Spleen (tissue), 13 donors: ENCODE measurements at regions of chr17 and their contacts with region 1.

Region 1: GRCh38 chr17:62703775-62704378 is 76.4 kb downstream of the MRC2 start:
- DNase-seq: peak; percentile 95
- H3K4me3 ChIP-seq: peak overlapping the region; percentile 52 to 86 (median 58)
- H3K27ac ChIP-seq: peak overlapping the region in 6 of 8 donors; percentile 58 to 77 (median 71)
- H3K4me1 ChIP-seq: peaks cover 4 to 42% (median 22%) of the 10 kb centered on the region in 6 donors
- H3K27me3 ChIP-seq: peaks cover 0 to 53% (median 0%) of the 10 kb centered on the region in 7 donors
- CTCF ChIP-seq: peak; percentile 54 to 93 (median 89)
- POLR2A ChIP-seq: no peak

Region 2: GRCh38 chr17:62668091-62668795 is 35.6 kb before region 1 on chr17:
- intact Hi-C with region 1: no loop called
- DNase-seq: no peak
- H3K4me3 ChIP-seq: no peak overlapping the region
- H3K27ac ChIP-seq: no peak overlapping the region
- H3K4me1 ChIP-seq: no peaks in the 10 kb centered on the region
- H3K27me3 ChIP-seq: peaks cover 0 to 5% (median 0%) of the 10 kb centered on the region in 7 donors
- CTCF ChIP-seq: no peak
- POLR2A ChIP-seq: no peak

Region 3: GRCh38 chr17:62970617-62971272 is 266.9 kb after region 1 on chr17:
- intact Hi-C with region 1: loop called (anchors 2 kb)
- DNase-seq: no peak
- H3K4me3 ChIP-seq: no peak overlapping the region
- H3K27ac ChIP-seq: no peak overlapping the region
- H3K4me1 ChIP-seq: peaks cover 9 to 28% (median 24%) of the 10 kb centered on the region in 6 donors
- H3K27me3 ChIP-seq: peaks cover 0 to 8% (median 0%) of the 10 kb centered on the region in 7 donors
- CTCF ChIP-seq: no peak
- POLR2A ChIP-seq: no peak

Region 4: DNA sequence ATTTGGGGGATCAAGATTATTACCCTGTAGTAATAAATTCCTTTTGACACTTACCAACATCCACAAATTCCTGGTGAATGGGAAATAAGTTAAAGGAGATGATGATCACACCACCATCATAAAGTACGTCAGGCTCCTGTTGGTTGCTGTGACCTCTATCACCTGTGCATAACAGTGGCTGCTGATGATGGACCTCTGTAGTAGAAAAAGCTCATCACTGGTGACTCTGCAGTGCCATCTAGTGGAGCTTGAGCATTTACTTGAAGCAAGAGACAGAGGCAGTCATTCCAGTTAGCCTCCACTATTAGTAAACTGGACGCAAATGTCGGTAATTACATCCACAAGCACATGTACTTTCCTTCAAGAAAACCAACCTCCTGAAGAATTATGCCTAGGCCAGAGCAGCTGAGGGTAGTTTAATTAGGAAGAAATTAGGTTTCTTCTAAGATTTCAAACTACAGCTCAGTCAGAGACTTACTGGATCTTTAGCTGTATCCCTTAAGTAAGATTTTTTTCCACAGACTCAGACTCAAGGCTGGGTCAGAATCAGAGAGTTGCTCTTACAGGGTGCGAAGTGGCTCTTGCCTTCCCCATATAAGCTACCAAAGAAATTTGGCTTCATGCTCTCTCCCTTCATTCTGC is 702.9 kb after region 1 on chr17:
- intact Hi-C with region 1: loop called (anchors 5 kb)
- DNase-seq: no peak
- H3K4me3 ChIP-seq: no peak overlapping the region
- H3K27ac ChIP-seq: no peak overlapping the region
- H3K4me1 ChIP-seq: peaks cover 0 to 8% (median 0%) of the 10 kb centered on the region in 6 donors
- H3K27me3 ChIP-seq: no peaks in the 10 kb centered on the region
- CTCF ChIP-seq: peak; percentile 43 to 85 (median 80)
- POLR2A ChIP-seq: no peak